ENCODE measurements at regions of chr20 and their contacts with region 1.

Region 1: DNA sequence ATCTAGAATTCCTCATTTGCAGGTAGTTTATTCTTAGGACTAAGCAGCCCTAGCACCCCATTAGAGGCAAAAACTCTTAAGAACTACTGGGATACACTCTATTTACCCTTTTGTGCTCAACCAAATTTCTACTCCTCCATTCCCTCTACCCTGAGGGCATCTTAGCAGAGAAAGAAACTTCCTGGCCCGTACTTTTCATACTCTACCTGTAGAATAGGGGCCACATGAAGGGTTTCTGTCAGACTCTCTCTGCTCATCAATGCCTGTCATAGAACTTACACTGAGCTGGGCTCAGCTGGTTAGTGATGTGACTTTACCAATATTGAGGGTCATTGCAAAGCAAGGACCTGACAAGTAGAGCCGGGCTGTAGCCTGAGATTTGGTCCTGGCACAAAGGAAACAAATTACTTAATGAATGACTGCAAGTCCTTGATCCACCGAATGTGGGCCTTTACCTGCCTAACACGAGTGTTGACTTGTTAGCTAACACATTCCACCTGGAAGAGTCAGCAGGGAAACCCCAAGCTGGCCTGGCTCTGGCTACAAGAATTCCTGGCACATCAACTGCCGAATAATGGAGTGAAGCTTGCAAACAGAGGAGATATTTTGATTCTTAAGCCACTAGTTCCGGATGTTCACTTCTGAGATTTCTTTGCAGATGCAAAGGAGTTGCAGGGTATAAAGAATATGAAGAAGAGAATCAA is 280.5 kb upstream of the JAG1 start:
- DNase-seq: peak; percentile 92
- H3K4me3 Mint-ChIP-seq: no peak overlapping the region
- H3K27ac Mint-ChIP-seq: peak overlapping the region; percentile 91
- H3K4me1 Mint-ChIP-seq: peaks cover 19% of the 10 kb centered on the region
- H3K27me3 Mint-ChIP-seq: no peaks in the 10 kb centered on the region
- CTCF ChIP-seq: no peak

Region 2: DNA sequence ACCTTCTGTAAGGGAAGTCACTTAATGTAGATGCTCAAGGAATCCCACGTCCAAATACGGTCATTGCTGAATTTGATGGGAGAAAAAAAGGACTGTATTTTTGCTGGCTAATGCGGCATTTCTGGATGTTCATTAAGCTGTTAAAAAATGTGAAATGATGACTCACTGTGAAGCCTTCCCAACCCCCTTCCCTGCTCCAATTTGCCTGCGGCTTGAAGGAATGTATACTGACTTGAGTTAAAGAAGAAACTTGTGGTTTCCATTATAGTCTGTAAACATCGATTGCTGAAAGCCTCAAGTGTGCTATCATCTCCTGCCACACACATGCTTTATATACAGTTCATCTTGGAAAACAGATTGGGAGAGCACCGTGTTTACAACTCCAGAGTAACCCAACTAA is 31.3 kb before region 1 on chr20:
- CTCF ChIA-PET with region 1: interaction called, 3 read pairs
- POLR2A ChIA-PET with region 1: interaction called, 37 read pairs
- intact Hi-C with region 1: no loop called
- DNase-seq: peak; percentile 85
- H3K4me3 Mint-ChIP-seq: peak overlapping the region; percentile 24
- H3K27ac Mint-ChIP-seq: peak overlapping the region; percentile 50
- H3K4me1 Mint-ChIP-seq: peaks cover 46% of the 10 kb centered on the region
- H3K27me3 Mint-ChIP-seq: no peaks in the 10 kb centered on the region
- CTCF ChIP-seq: no peak

Region 3: DNA sequence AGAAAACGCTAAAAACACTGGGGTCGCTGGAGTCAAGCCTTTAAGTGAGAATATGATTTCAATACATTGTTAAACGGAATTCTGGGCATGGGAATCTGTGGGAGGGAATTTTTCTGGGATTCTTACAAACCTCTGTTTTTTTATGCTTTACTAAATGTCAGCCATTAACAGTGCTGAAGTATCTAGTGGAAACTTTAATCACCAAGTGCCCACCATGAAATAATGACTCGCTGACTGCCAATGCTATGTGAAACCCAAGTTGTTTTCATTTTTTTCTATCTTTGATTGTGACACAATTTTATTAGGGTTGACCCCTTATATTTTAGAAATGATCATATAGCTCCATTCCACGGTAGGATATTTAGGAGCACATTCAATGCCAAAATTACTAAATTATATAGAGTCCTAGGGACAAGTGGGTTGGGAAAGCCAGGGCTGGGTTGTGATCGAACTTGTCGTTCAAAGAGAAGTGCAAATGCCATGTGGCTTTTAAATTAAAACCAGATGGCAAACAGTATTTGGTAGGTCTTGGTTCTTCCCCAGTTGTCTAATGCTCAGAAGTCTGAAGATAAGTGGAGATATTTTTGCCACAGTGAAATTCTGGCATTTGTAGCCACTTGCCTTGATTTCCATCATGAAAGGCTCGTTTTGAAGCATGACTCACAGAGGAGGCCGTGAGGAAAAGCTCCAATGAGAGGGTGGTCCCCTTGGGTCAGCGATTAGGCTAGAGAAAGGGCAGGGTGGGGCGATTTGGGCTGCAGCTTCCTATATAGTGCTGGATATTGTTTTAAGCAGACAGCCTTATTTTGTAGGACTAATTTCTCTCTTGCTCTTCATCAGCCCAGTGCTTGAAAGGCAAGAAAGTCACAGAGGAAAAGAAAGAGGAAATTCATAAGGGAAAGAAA is 26.1 kb before region 1 on chr20:
- CTCF ChIA-PET with region 1: interaction called, 3 read pairs
- POLR2A ChIA-PET with region 1: interaction called, 37 read pairs
- intact Hi-C with region 1: no loop called
- DNase-seq: no peak
- H3K4me3 Mint-ChIP-seq: no peak overlapping the region
- H3K27ac Mint-ChIP-seq: no peak overlapping the region
- H3K4me1 Mint-ChIP-seq: peaks cover 17% of the 10 kb centered on the region
- H3K27me3 Mint-ChIP-seq: no peaks in the 10 kb centered on the region
- CTCF ChIP-seq: no peak

Region 4: GRCh38 chr20:10939331-10939949 is 14.8 kb before region 1 on chr20:
- CTCF ChIA-PET with region 1: interaction called, 5 read pairs
- POLR2A ChIA-PET with region 1: interaction called, 11 read pairs
- intact Hi-C with region 1: no loop called
- DNase-seq: peak; percentile 52
- H3K4me3 Mint-ChIP-seq: no peak overlapping the region
- H3K27ac Mint-ChIP-seq: peak overlapping the region; percentile 68
- H3K4me1 Mint-ChIP-seq: peaks cover 14% of the 10 kb centered on the region
- H3K27me3 Mint-ChIP-seq: no peaks in the 10 kb centered on the region
- CTCF ChIP-seq: no peak

Region 5: DNA sequence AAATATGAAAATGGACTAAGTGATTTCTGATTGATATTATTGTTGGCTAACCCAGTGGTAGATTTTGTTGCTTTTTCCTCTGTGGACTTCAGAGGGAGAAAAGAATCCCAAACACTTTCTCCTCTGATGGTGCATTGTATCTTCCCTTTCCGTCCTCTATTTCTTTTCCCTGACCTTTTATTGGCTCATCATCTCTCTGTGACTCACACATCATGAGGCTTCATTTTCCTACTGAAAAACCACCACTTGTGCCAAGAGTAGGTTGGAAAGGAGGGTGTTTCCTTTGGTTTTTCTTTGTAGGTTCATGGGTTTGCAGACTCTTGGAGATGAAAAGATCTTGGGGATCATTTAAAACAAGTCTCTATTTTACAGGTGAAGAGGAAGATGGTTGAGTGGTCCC is 31.2 kb after region 1 on chr20:
- CTCF ChIA-PET with region 1: no interaction called
- POLR2A ChIA-PET with region 1: interaction called, 12 read pairs
- intact Hi-C with region 1: no loop called
- DNase-seq: peak; percentile 62
- H3K4me3 Mint-ChIP-seq: no peak overlapping the region
- H3K27ac Mint-ChIP-seq: peak overlapping the region; percentile 18
- H3K4me1 Mint-ChIP-seq: peaks cover 25% of the 10 kb centered on the region
- H3K27me3 Mint-ChIP-seq: no peaks in the 10 kb centered on the region
- CTCF ChIP-seq: no peak

Region 6: GRCh38 chr20:11041396-11041795 is 87.1 kb after region 1 on chr20:
- CTCF ChIA-PET with region 1: no interaction called
- POLR2A ChIA-PET with region 1: no interaction called
- intact Hi-C with region 1: no loop called
- DNase-seq: peak; percentile 20
- H3K4me3 Mint-ChIP-seq: no peak overlapping the region
- H3K27ac Mint-ChIP-seq: no peak overlapping the region
- H3K4me1 Mint-ChIP-seq: no peaks in the 10 kb centered on the region
- H3K27me3 Mint-ChIP-seq: no peaks in the 10 kb centered on the region
- CTCF ChIP-seq: no peak